Activated CD4-positive, alpha-beta T cell treated with anti-CD3 and anti-CD28 coated beads, Interleukin-2, amount 10 ng/mL, durations not matched to agents 24 days and 14 days (primary cell): ENCODE measurements at regions of chr7 and their contacts with region 1.

Region 1: DNA sequence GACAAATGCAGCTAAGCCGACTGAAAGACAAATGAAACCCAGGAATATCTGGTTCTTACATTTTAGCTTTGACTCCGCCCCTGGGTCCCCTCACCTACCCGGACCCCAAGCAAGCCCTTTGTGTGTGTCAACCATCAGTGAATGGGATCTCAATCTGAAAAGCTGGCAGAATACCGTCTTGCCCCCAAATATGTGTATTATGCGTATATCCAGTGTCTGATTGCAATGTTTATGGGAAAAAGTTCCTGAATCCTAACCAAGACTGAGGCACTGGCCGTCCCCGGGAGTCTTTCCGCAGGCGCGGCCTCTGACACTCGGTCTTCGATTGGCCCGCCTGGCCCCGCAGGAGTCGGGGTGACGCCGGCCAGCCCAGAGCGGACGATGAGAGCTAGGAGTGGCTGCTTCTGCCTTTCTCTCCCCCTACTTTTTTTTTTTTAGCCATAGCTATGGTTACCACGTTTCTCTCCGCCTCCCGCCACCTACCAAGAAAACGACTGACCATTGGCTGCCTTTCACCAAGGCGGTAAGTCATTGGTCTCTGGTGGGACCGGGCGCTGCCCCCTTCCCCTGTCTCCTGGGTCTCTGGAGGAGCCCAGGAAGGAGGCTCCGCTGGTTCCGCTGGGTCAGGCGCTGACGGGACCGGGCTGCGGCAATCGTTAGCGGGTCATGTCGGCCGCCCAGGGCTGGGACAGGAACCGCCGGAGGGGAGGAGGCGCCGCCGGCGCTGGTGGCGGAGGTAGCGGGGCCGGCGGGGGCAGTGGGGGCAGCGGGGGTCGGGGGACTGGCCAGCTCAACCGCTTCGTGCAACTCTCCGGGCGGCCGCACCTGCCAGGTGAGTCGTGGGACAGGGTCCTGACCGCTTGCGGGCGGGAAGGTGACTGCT is at the start of gene KLHDC10:
- DNase-seq: peak; percentile 98
- H3K4me3 Mint-ChIP-seq: peak within 1 kb of the TSS; percentile 95
- H3K27ac Mint-ChIP-seq: peak within 1 kb of the TSS; percentile 81
- H3K4me1 Mint-ChIP-seq: peaks cover 27% of the 10 kb centered on the region
- H3K27me3 Mint-ChIP-seq: no peaks in the 10 kb centered on the region
- total RNA-seq, gene KLHDC10: 14.4 and 16.8 TPM in 2 replicates

Region 2: DNA sequence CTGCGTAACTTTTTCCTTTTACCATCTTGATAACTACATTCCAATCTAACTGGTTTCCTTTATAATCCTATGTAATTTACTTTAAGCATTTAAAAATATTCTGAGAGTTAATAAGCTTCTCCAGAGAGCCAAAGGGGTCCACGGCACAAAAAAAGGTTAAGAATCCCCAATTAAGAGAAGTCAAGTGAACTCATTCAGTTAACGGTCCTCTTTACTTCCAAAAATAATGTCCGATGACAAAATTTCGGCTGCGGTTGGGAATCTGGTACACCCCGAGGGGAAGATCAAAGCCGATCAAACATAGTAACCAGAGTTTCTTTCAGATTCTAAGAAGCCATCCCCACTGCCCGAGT is 19.5 kb before region 1 on chr7:
- intact Hi-C with region 1: loop called (anchors 1 kb)
- DNase-seq: no peak
- H3K4me3 Mint-ChIP-seq: peak overlapping the region; percentile 99
- H3K27ac Mint-ChIP-seq: peak overlapping the region; percentile 98
- H3K4me1 Mint-ChIP-seq: peaks cover 10% of the 10 kb centered on the region
- H3K27me3 Mint-ChIP-seq: no peaks in the 10 kb centered on the region

Region 3: GRCh38 chr7:130182990-130183389 is 112.8 kb after region 1 on chr7:
- intact Hi-C with region 1: loop called (anchors 2 kb)
- DNase-seq: no peak
- H3K4me3 Mint-ChIP-seq: no peak overlapping the region
- H3K27ac Mint-ChIP-seq: peak overlapping the region; percentile 78
- H3K4me1 Mint-ChIP-seq: peaks cover 20% of the 10 kb centered on the region
- H3K27me3 Mint-ChIP-seq: no peaks in the 10 kb centered on the region

Region 4: GRCh38 chr7:130242198-130243014 is 172.2 kb after region 1 on chr7:
- intact Hi-C with region 1: loop called (anchors 2 kb)
- DNase-seq: peak; percentile 84
- H3K4me3 Mint-ChIP-seq: no peak overlapping the region
- H3K27ac Mint-ChIP-seq: no peak overlapping the region
- H3K4me1 Mint-ChIP-seq: peaks cover 14% of the 10 kb centered on the region
- H3K27me3 Mint-ChIP-seq: peaks cover 4% of the 10 kb centered on the region

Region 5: DNA sequence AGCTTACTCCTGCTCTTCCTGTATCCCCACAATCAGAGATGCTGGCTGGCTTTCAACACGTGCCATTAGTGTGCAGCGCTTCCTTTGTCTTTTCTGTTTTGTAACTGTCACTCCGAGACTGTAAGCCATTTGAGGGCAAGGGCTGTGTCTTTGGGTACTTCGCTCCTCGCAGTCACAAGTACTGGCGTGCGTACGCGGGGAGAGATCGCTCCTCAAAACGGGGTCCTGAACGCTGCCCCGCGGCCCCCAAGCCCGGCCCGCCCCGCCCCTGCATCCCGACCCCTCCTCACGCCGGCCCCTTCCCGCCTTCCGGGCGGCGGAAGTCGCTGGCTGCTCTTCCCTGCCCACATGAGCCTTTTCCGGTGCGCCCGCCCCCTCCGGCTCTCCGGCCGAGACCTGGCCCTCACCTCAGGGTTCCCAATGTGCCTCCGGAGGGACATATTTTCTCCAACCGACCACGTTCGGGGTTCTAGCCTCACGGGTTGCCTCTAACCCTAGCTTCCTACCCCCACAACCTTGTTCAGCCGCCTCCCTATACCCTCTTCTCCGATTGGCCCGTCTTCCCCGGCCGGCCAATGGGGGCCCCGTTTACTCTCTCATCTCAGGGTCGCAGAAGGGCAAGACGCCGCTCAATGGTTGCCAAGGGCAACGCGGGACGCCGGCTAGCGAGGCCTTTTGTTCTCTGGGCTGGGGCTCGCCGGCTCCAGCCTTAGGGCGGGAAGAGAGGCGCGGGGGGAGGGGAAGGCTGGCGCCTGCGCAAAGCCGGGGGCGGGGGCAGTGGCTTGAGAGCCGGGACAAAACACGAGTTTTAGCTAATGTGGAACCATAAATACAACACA is 370.5 kb after region 1 on chr7 and contains the start of gene CEP41:
- intact Hi-C with region 1: loop called (anchors 2 kb)
- DNase-seq: peak; percentile 97
- H3K4me3 Mint-ChIP-seq: peak within 1 kb of the TSS; percentile 99
- H3K27ac Mint-ChIP-seq: peak within 1 kb of the TSS; percentile 99
- H3K4me1 Mint-ChIP-seq: peaks cover 37% of the 10 kb centered on the region
- H3K27me3 Mint-ChIP-seq: no peaks in the 10 kb centered on the region
- total RNA-seq, gene CEP41: 14.3 and 16.7 TPM in 2 replicates

Region 6: DNA sequence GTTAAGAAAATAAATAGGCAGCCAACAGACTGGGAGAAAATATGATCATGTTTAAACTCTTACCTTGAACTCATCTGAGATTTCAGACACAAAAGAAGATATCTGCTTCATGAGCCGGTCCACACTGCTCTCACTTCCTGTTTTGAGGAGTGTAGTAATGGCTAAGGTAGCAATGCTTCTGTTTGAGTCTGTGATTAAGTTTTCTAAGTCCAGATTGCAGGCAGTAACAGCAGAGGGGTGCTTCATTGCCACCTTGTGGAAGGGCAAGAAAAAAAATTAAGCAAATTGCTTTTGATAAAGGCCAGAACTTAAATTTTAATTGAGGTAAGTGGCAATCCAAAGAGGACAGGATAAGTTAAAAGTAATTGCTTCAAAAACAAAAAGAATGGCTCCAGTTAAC is 490.8 kb after region 1 on chr7:
- intact Hi-C with region 1: loop called (anchors 10 kb)
- DNase-seq: peak; percentile 63
- H3K4me3 Mint-ChIP-seq: no peak overlapping the region
- H3K27ac Mint-ChIP-seq: no peak overlapping the region
- H3K4me1 Mint-ChIP-seq: no peaks in the 10 kb centered on the region
- H3K27me3 Mint-ChIP-seq: no peaks in the 10 kb centered on the region

Region 7: GRCh38 chr7:130758429-130759056 is 688.3 kb after region 1 on chr7:
- intact Hi-C with region 1: loop called (anchors 1 kb)
- DNase-seq: no peak
- H3K4me3 Mint-ChIP-seq: no peak overlapping the region
- H3K27ac Mint-ChIP-seq: no peak overlapping the region
- H3K4me1 Mint-ChIP-seq: no peaks in the 10 kb centered on the region
- H3K27me3 Mint-ChIP-seq: peaks cover 17% of the 10 kb centered on the region